ENCODE measurements at regions of chr15 and their contacts with region 1.

Region 1: DNA sequence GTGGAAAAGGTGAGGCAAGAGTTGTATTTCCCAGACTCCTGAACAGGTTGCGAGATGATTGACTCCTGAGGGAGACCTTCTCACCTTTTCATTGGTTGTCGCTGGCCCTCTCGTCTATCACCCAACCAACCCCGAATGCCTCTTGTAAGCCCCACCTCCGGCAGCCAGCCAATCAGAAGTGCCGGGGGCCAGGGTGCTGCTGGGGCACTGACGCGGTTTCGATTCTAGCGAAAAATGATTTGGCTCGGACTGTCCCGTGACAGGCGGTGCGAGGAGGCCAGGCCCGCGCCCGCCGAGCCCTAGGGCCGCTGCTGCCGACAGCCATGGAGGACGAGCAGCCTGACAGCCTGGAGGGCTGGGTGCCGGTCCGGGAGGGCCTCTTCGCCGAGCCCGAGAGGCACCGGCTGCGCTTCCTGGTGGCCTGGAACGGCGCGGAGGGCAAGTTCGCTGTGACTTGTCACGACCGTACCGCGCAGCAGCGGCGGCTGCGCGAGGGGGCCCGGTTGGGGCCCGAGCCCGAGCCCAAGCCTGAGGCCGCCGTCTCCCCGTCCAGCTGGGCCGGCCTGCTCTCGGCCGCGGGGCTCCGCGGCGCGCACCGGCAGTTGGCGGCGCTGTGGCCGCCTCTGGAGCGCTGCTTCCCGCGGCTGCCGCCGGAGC is at the start of gene WHAMM:
- DNase-seq: peak; percentile 99
- ATAC-seq: peak; percentile 92
- total RNA-seq, gene WHAMM: 6.4 TPM

Region 2: DNA sequence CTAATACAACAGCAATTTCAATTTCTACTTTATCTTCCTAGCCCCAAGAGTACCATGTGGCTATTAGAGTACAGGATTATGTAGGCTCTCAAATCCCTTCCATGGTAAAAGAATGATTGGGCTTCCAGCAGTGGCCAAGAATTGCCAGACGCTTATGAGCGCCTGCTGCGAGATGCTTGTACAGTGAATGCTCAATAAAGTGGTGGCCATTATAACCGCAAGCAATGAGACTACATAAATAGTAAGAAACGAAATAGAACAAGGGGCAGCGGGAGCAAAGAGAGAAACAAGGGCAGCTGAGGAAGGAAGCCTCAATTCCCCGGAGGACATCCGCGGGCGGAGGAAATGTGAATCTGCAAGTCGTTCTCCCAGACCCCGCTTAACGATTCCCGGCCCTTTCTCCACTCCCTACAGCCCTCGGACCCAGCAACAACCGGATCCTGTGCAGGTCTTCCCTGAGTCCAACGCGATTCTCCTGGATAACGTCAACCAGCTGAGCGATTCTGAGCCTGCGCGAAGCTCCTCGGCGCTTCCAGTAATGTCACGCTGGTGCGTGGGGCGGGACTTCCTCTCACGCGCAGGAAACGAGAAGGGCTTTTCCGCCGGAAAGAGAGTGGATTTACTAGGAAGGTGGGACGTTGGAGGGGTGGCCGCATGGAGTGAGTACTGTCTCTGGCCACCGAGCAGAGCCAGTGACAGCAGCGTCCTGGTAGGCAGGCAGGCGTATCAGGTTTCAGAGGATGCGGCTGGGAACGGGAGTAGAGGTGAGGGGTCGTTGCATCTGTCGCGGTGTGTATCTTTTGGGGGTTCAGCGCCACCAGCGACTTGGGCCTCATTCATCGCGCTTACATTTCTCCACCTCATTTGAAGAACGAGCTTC is 59.3 kb before region 1 on chr15:
- intact Hi-C with region 1: loop called (anchors 10 kb)
- DNase-seq: peak; percentile 94
- ATAC-seq: peak; percentile 99

Region 3: GRCh38 chr15:82999905-83000671 is 190.6 kb after region 1 on chr15:
- intact Hi-C with region 1: no loop called
- DNase-seq: no peak
- ATAC-seq: peak; percentile 85

Measured in left ventricle myocardium superior (tissue), 1 donor.